ENCODE measurements at regions of chr19 and their contacts with region 1.

Region 1: GRCh38 chr19:41775360-41775695 is 20.0 kb downstream of the CEACAM6 start:
- DNase-seq: no peak
- H3K4me3 ChIP-seq: no peak overlapping the region
- H3K27me3 ChIP-seq: peaks cover 3% of the 10 kb centered on the region
- CTCF ChIP-seq: no peak

Region 2: DNA sequence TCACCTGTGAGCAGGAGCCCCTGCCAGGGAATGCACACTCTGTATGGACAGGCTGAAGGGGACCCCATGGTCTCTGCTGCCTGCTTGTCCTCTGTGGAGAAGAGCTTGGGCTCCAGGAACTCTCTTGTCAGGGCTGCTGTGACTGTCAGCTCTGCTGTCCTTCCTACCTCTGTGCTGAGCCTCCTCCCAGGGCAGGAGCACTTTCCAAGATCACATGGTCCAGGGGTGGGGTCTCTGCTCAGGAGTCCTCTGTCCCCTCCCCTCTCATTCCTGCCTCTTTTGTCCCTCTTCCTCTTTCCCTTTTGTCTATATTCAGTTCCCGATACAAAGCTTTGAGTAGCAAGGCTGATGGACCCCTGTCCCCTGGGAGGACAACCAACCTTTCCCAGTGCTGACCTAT is 87.2 kb before region 1 on chr19 and contains the start of gene CEACAM7:
- CTCF ChIA-PET with region 1: no interaction called
- POLR2A ChIA-PET with region 1: no interaction called
- DNase-seq: no peak
- H3K4me3 ChIP-seq: no peak within 1 kb of the TSS
- H3K27me3 ChIP-seq: no peaks in the 10 kb centered on the region
- CTCF ChIP-seq: no peak
- polyA plus RNA-seq, gene CEACAM7: not detected in 2 replicates

Region 3: GRCh38 chr19:41785653-41786052 is 10.3 kb after region 1 on chr19:
- CTCF ChIA-PET with region 1: interaction called, 89 read pairs
- POLR2A ChIA-PET with region 1: no interaction called
- DNase-seq: no peak
- H3K4me3 ChIP-seq: no peak overlapping the region
- H3K27me3 ChIP-seq: peaks cover 4% of the 10 kb centered on the region; the same call in 1 of the 2 replicates
- CTCF ChIP-seq: peak; percentile 83

Region 4: GRCh38 chr19:42098781-42099180 is 323.5 kb after region 1 on chr19:
- CTCF ChIA-PET with region 1: no interaction called
- POLR2A ChIA-PET with region 1: no interaction called
- DNase-seq: no peak
- H3K4me3 ChIP-seq: no peak overlapping the region
- H3K27me3 ChIP-seq: no peaks in the 10 kb centered on the region
- CTCF ChIP-seq: no peak